ENCODE measurements at regions of chr6 and their contacts with region 1.

Region 1: GRCh38 chr6:170516783-170517616 is 36.1 kb downstream of the PSMB1 start:
- DNase-seq: peak; percentile 39
- CTCF ChIP-seq: peak; percentile 74

Region 2: DNA sequence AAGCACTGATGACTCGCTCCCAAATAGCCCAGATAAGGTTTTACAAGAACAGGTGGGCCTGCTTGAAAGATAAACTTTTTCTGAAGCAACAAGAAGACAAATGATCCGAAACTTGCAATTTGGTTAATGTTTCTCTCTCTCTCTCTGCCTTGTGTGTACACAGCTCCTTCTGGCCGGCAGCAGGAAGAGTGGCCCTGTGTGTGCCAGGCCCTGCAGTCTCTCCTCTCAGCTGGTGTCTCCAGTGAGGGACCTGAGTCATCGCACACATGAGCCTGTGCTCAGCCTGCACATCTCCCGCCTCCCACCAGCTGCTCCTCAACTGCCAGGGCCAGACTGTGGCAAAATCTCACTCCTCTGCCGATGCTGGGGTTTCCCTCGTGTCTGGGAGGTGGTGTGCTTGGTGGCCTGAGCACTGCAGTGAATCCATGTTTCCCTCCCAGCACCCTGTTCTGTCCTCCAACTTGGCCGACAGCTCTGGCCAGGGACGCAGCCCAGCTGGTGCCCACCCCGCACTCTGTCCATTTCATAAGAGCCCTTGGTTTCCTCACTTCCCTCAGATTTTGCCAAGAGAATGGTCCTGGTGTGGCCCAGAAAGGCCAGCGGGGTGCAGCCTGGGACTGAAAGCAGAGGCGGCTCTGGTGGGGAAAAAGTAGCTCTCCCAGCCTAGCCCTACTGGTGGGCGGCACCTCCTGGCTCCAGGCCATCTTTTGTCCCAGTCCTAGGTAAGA is 716.2 kb before region 1 on chr6:
- CTCF ChIA-PET with region 1: interaction called, 18 read pairs
- POLR2A ChIA-PET with region 1: no interaction called
- DNase-seq: no peak
- CTCF ChIP-seq: no peak

Region 3: DNA sequence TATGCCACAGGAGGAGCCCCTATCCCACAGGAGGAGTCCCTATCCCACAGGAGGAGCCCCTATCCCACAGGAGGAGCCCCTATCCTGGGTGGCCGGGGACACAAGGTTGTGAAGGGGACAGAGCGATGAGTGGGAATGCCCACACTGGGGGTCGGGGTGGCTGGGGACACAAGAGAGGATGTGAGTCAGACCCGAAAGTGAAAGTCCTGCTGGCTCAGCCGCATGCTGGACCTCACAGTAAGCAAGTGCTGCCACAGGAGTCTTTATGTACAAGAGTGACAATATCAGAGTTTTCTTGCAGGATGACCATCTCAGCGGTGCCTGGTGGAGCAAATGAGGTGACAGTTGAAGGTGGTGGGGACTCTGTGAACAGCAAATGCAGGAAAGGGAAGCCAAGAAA is 57.5 kb before region 1 on chr6:
- CTCF ChIA-PET with region 1: interaction called, 17 read pairs
- POLR2A ChIA-PET with region 1: no interaction called
- DNase-seq: peak; percentile 70
- CTCF ChIP-seq: no peak

Region 4: DNA sequence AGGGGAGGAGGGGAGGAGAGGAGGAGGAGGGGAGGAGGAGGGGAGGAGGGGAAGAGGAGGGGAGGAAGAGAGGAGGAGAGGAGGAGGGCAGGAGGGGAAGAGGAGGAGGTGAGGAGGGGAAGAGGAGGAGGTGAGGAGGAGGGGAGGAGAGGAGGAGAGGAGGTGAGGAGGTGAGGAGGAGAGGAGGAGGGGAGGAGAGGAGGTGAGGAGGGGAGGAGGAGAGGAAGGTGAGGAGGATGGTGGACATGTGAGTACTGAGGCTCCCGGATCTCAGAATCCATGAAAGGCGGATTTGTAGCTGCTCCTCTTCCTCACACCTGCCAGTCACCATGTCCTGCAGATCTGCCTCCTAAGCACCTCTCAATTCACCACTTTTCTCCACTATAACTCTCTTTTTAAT is 23.6 kb before region 1 on chr6:
- CTCF ChIA-PET with region 1: no interaction called
- POLR2A ChIA-PET with region 1: no interaction called
- DNase-seq: no peak
- CTCF ChIP-seq: no peak

Region 5: DNA sequence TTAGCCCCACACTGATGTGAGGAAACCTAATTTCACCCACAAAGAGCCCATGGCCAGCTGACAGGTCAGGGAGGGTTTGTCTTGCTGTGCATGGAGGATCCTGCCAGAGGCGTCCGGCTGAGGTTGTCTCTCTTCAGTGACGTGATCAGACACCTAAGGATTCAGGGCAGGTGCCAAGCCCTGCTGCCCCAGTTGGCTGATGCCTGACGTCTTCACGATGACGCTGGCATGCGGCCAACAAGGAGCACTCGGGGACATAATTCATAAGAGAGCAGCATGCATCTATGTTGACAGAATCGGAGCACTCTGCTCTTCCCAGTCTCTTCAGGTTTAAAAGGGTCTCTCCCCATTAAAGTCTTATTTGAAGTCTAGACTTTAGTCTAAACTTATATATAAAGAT is 11.7 kb before region 1 on chr6:
- CTCF ChIA-PET with region 1: interaction called, 17 read pairs
- POLR2A ChIA-PET with region 1: no interaction called
- DNase-seq: no peak
- CTCF ChIP-seq: no peak

Region 6: GRCh38 chr6:170529839-170530469 is 13.0 kb after region 1 on chr6:
- CTCF ChIA-PET with region 1: interaction called, 18 read pairs
- POLR2A ChIA-PET with region 1: no interaction called
- DNase-seq: peak; percentile 70
- CTCF ChIP-seq: peak; percentile 84

Region 7: GRCh38 chr6:170564927-170565530 is 48.0 kb after region 1 on chr6:
- CTCF ChIA-PET with region 1: no interaction called
- POLR2A ChIA-PET with region 1: no interaction called
- DNase-seq: no peak
- CTCF ChIP-seq: no peak

Measured in GM10248 (cell line).